Heart right ventricle (tissue), 16 donors: ENCODE measurements at regions of chr1 and their contacts with region 1.

Region 1: GRCh38 chr1:208233546-208233945 is 10.6 kb downstream of the PLXNA2 start:
- DNase-seq: no peak
- ATAC-seq: peak in 6 of 8 donors; percentile 23 to 64 (median 40)
- H3K4me3 ChIP-seq: no peak overlapping the region
- H3K27ac ChIP-seq: peak overlapping the region in 4 of 10 donors; percentile 19 to 61 (median 42)
- H3K4me1 ChIP-seq: peaks cover 28 to 98% (median 80%) of the 10 kb centered on the region in 9 donors
- H3K27me3 ChIP-seq: no peaks in the 10 kb centered on the region
- CTCF ChIP-seq: no peak

Region 2: GRCh38 chr1:208141610-208142192 is 91.8 kb before region 1 on chr1:
- intact Hi-C with region 1: loop called in 2 of 10 experiments (anchors 5 to 10 kb)
- DNase-seq: no peak
- ATAC-seq: peak in 1 of 8 donors; percentile 10
- H3K4me3 ChIP-seq: no peak overlapping the region
- H3K27ac ChIP-seq: no peak overlapping the region
- H3K4me1 ChIP-seq: peaks cover 0 to 17% (median 7%) of the 10 kb centered on the region in 9 donors
- H3K27me3 ChIP-seq: no peaks in the 10 kb centered on the region
- CTCF ChIP-seq: no peak